ENCODE measurements at regions of chr22 and their contacts with region 1.

Region 1: GRCh38 chr22:38755911-38756532 is at the start of gene SUN2:
- DNase-seq: peak; percentile 90 to 97 (median 94)
- ATAC-seq: peak; percentile 66
- H3K4me3 ChIP-seq: peak within 1 kb of the TSS; percentile 91 to 96
- H3K4me3 Mint-ChIP-seq: peak within 1 kb of the TSS; percentile 98
- H3K27ac ChIP-seq: peak within 1 kb of the TSS; percentile 65 to 73
- H3K27ac Mint-ChIP-seq: peak within 1 kb of the TSS; percentile 99
- H3K4me1 ChIP-seq: peaks cover 57% of the 10 kb centered on the region
- H3K4me1 Mint-ChIP-seq: peaks cover 58% of the 10 kb centered on the region
- H3K27me3 ChIP-seq: no peaks in the 10 kb centered on the region
- H3K27me3 Mint-ChIP-seq: no peaks in the 10 kb centered on the region
- CTCF ChIP-seq: no peak
- total RNA-seq, gene SUN2: 431 to 454 TPM

Region 2: GRCh38 chr22:38506118-38506962 is 249.7 kb before region 1 on chr22 and contains the start of gene DDX17:
- CTCF ChIA-PET with region 1: no interaction called
- POLR2A ChIA-PET with region 1: no interaction called
- intact Hi-C with region 1: loop called (anchors 5 kb)
- DNase-seq: peak; percentile 91 to 99 (median 95)
- ATAC-seq: peak; percentile 89
- H3K4me3 ChIP-seq: peak within 1 kb of the TSS; percentile 83 to 91
- H3K4me3 Mint-ChIP-seq: peak within 1 kb of the TSS; percentile 98
- H3K27ac ChIP-seq: peak within 1 kb of the TSS; percentile 97 to 99
- H3K27ac Mint-ChIP-seq: peak within 1 kb of the TSS; percentile 100
- H3K4me1 ChIP-seq: peaks cover 38% of the 10 kb centered on the region
- H3K4me1 Mint-ChIP-seq: peaks cover 46% of the 10 kb centered on the region
- H3K27me3 ChIP-seq: no peaks in the 10 kb centered on the region
- H3K27me3 Mint-ChIP-seq: no peaks in the 10 kb centered on the region
- CTCF ChIP-seq: no peak
- total RNA-seq, gene DDX17: 348 to 386 TPM

Region 3: GRCh38 chr22:38718414-38718813 is 37.6 kb before region 1 on chr22:
- CTCF ChIA-PET with region 1: no interaction called
- POLR2A ChIA-PET with region 1: no interaction called
- intact Hi-C with region 1: no loop called
- DNase-seq: no peak
- ATAC-seq: no peak
- H3K4me3 ChIP-seq: no peak overlapping the region
- H3K4me3 Mint-ChIP-seq: no peak overlapping the region
- H3K27ac ChIP-seq: no peak overlapping the region
- H3K27ac Mint-ChIP-seq: no peak overlapping the region
- H3K4me1 ChIP-seq: no peaks in the 10 kb centered on the region
- H3K4me1 Mint-ChIP-seq: peaks cover 21% of the 10 kb centered on the region
- H3K27me3 ChIP-seq: no peaks in the 10 kb centered on the region
- H3K27me3 Mint-ChIP-seq: no peaks in the 10 kb centered on the region
- CTCF ChIP-seq: no peak

Region 4: DNA sequence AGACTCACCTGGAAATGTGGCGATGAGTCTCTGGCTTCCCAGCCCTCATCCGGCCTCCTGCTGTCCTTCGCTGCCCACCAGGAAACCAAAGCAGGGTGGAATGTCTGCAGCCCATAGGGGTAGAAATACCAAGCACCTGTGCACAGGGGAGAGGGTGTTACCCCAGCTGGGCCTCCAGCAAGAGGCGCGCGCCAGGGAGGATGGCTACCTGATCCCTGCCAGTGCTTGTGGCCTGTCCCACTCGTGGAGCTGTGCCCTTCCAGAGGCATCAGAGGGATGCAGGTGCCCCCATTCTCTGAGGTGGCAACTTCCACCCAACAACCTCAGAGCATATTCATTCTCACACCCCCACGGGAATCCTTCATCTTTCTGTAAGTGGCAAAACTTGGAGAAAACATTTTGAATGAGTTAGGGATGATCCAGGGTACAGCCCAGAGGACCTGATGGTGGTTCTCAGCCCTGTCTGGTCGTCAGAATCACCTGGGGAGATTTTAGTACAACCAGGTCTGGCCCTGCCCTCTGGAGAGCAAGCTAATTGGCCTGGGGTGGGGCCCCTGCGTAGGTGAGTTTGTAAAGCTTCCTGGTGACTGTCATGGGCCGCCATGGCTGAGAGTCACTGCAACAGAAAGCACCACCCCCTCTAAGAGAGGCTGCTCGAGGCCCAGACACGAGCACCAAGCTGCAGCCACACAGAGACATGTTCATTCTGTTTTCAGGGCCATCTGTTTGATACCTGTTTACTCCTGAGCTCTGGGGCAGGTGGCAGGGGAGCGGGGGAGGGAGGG is 10.2 kb before region 1 on chr22:
- CTCF ChIA-PET with region 1: interaction called, 5 read pairs
- POLR2A ChIA-PET with region 1: interaction called, 589 read pairs
- intact Hi-C with region 1: no loop called
- DNase-seq: no peak
- ATAC-seq: no peak
- H3K4me3 ChIP-seq: no peak overlapping the region
- H3K4me3 Mint-ChIP-seq: peak overlapping the region; percentile 11
- H3K27ac ChIP-seq: peak overlapping the region; percentile 14 to 50
- H3K27ac Mint-ChIP-seq: peak overlapping the region; percentile 52
- H3K4me1 ChIP-seq: peaks cover 73% of the 10 kb centered on the region
- H3K4me1 Mint-ChIP-seq: peaks cover 60% of the 10 kb centered on the region
- H3K27me3 ChIP-seq: no peaks in the 10 kb centered on the region
- H3K27me3 Mint-ChIP-seq: no peaks in the 10 kb centered on the region
- CTCF ChIP-seq: no peak

Region 5: DNA sequence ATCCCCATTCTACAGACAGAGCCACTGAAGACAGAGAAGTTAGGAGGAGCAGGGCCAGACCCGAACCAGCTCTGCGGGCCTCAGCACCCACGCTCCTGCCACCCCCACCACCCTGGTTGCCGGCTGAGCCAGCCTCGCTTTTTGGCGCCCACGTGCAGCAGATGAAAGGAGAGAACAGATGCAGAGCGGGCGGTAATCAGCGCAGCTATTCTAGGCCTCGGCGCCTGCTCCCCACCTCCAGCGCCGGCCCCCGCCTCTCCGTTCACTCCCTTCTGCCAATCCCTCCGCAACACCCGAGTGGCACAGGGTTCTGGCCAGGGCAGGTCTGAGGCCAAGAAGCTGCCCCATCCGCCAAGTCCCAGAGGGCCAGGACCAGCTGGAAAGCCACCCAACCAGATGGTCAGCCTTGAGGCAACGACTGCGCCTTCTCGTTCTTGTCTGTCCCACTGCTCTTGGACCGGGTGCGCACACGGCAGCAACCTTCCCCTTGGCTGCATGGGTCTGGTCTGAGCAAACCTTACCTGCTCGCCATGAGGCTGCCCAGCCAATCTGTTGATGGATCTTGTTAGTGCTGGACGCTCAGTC is 21.2 kb after region 1 on chr22:
- CTCF ChIA-PET with region 1: no interaction called
- POLR2A ChIA-PET with region 1: no interaction called
- intact Hi-C with region 1: no loop called
- DNase-seq: no peak
- ATAC-seq: no peak
- H3K4me3 ChIP-seq: no peak overlapping the region
- H3K4me3 Mint-ChIP-seq: no peak overlapping the region
- H3K27ac ChIP-seq: no peak overlapping the region
- H3K27ac Mint-ChIP-seq: no peak overlapping the region
- H3K4me1 ChIP-seq: no peaks in the 10 kb centered on the region
- H3K4me1 Mint-ChIP-seq: peaks cover 3% of the 10 kb centered on the region
- H3K27me3 ChIP-seq: no peaks in the 10 kb centered on the region
- H3K27me3 Mint-ChIP-seq: no peaks in the 10 kb centered on the region
- CTCF ChIP-seq: no peak

Region 6: GRCh38 chr22:38793721-38794466 is 37.9 kb after region 1 on chr22 and contains the start of gene DNAL4:
- CTCF ChIA-PET with region 1: no interaction called
- POLR2A ChIA-PET with region 1: no interaction called
- intact Hi-C with region 1: loop called (anchors 1 kb)
- DNase-seq: peak; percentile 82 to 97 (median 92)
- ATAC-seq: peak; percentile 98
- H3K4me3 ChIP-seq: peak within 1 kb of the TSS; percentile 62 to 67
- H3K4me3 Mint-ChIP-seq: peak within 1 kb of the TSS; percentile 92
- H3K27ac ChIP-seq: peak within 1 kb of the TSS; percentile 68 to 75
- H3K27ac Mint-ChIP-seq: peak within 1 kb of the TSS; percentile 94
- H3K4me1 ChIP-seq: peaks cover 25% of the 10 kb centered on the region
- H3K4me1 Mint-ChIP-seq: peaks cover 31% of the 10 kb centered on the region
- H3K27me3 ChIP-seq: no peaks in the 10 kb centered on the region
- H3K27me3 Mint-ChIP-seq: peaks cover 10% of the 10 kb centered on the region
- CTCF ChIP-seq: no peak
- total RNA-seq, gene DNAL4: 2.5 to 3.6 TPM

Region 7: GRCh38 chr22:38943201-38943600 is 187.2 kb after region 1 on chr22:
- CTCF ChIA-PET with region 1: no interaction called
- POLR2A ChIA-PET with region 1: no interaction called
- intact Hi-C with region 1: no loop called
- DNase-seq: no peak
- ATAC-seq: no peak
- H3K4me3 ChIP-seq: no peak overlapping the region
- H3K4me3 Mint-ChIP-seq: no peak overlapping the region
- H3K27ac ChIP-seq: no peak overlapping the region
- H3K27ac Mint-ChIP-seq: no peak overlapping the region
- H3K4me1 ChIP-seq: peaks cover 13% of the 10 kb centered on the region
- H3K4me1 Mint-ChIP-seq: peaks cover 20% of the 10 kb centered on the region
- H3K27me3 ChIP-seq: peaks cover 8 to 10% of the 10 kb centered on the region in 2 experiments
- H3K27me3 Mint-ChIP-seq: peaks cover 60% of the 10 kb centered on the region
- CTCF ChIP-seq: no peak

Region 8: DNA sequence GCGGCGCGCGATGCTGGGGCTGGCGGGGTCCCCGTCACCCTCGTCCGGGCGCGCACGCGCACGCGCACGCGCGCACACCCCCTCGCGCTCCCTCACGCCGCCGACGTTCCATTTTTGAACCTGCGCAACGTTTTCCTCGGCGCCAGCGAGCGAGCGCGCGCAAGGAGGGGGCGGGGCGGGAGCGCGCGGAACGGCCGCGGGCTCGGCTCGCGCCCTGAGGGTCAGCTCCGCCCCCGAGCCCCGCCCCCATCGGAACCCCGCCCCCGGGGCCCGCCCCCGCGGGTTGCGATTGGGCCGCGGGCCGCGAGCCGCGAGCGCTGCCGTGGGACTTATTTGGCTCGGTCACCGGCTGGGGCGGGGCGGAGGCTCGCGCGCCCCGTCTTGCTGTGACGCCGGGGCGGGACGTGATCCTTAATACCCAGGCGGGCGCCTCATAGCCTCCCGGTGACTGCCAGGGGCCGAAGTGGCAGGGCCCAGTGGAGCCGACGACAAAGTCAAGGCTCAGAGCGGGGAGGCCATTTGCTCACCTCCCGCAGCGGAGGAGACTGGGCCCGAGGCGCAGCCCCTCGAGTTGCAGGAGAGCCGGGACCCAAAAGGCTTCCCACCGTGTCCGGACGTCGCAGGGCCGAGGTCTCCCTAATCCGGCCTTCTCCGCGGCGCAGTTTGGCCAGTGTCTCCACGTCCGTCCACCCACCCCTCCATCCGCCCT is 396.6 kb after region 1 on chr22 and contains the start of gene CBX7:
- CTCF ChIA-PET with region 1: no interaction called
- POLR2A ChIA-PET with region 1: no interaction called
- intact Hi-C with region 1: loop called in 1 of 2 experiments (anchors 10 kb)
- DNase-seq: peak; percentile 84 to 99 (median 92)
- ATAC-seq: peak; percentile 82
- H3K4me3 ChIP-seq: peak within 1 kb of the TSS; percentile 83 to 89
- H3K4me3 Mint-ChIP-seq: peak within 1 kb of the TSS; percentile 92
- H3K27ac ChIP-seq: peak within 1 kb of the TSS; percentile 86 to 87
- H3K27ac Mint-ChIP-seq: peak within 1 kb of the TSS; percentile 91
- H3K4me1 ChIP-seq: peaks cover 51% of the 10 kb centered on the region
- H3K4me1 Mint-ChIP-seq: peaks cover 42% of the 10 kb centered on the region
- H3K27me3 ChIP-seq: no peaks in the 10 kb centered on the region
- H3K27me3 Mint-ChIP-seq: no peaks in the 10 kb centered on the region
- CTCF ChIP-seq: no peak
- total RNA-seq, gene CBX7: 34.2 to 37.2 TPM